B cell (primary cell): ENCODE measurements at regions of chr11 and their contacts with region 1.

Region 1: GRCh38 chr11:10641177-10641911 is 52.2 kb downstream of the IRAG1 start:
- DNase-seq: peak; percentile 77
- ATAC-seq: peak; percentile 87
- H3K4me3 ChIP-seq: peak overlapping the region in 1 of 5 experiments; percentile 35
- H3K4me3 Mint-ChIP-seq: peak overlapping the region; percentile 74
- H3K27ac ChIP-seq: peak overlapping the region; percentile 87 to 88
- H3K27ac Mint-ChIP-seq: peak overlapping the region; percentile 94
- H3K4me1 ChIP-seq: peaks cover 55 to 79% of the 10 kb centered on the region in 2 donors
- H3K4me1 Mint-ChIP-seq: peaks cover 81% of the 10 kb centered on the region
- H3K27me3 ChIP-seq: no peaks in the 10 kb centered on the region
- H3K27me3 Mint-ChIP-seq: no peaks in the 10 kb centered on the region
- CTCF ChIP-seq: no peak

Region 2: DNA sequence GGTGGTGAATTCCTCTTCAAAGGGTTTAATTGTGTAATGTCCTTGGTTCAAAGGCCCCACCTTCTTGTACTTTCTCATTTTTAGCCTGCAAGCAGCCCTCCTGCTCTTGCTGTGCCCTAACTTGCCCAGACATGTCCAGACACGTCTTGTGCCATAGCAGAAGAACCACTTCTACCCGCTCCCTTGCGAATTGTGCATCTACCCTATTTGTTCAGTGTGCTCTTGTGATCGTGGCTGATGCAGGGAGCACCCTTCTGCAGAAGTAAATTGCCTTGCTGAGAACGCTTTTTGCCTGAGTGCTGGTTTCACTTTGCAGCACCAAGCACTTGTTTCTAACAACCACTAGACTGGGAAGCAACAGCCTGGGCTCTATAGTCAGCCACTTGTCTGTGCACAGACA is 596.7 kb before region 1 on chr11:
- CTCF ChIA-PET with region 1: no interaction called
- POLR2A ChIA-PET with region 1: no interaction called
- intact Hi-C with region 1: loop called (anchors 5 kb)
- DNase-seq: no peak
- ATAC-seq: no peak
- H3K4me3 ChIP-seq: no peak overlapping the region
- H3K4me3 Mint-ChIP-seq: no peak overlapping the region
- H3K27ac ChIP-seq: no peak overlapping the region
- H3K27ac Mint-ChIP-seq: no peak overlapping the region
- H3K4me1 ChIP-seq: peaks cover 0 to 3% of the 10 kb centered on the region in 2 donors
- H3K4me1 Mint-ChIP-seq: peaks cover 12% of the 10 kb centered on the region
- H3K27me3 ChIP-seq: no peaks in the 10 kb centered on the region
- H3K27me3 Mint-ChIP-seq: no peaks in the 10 kb centered on the region
- CTCF ChIP-seq: no peak

Region 3: GRCh38 chr11:10990637-10991193 is 349.4 kb after region 1 on chr11:
- CTCF ChIA-PET with region 1: no interaction called
- POLR2A ChIA-PET with region 1: no interaction called
- intact Hi-C with region 1: no loop called
- DNase-seq: no peak
- ATAC-seq: no peak
- H3K4me3 ChIP-seq: no peak overlapping the region
- H3K4me3 Mint-ChIP-seq: no peak overlapping the region
- H3K27ac ChIP-seq: no peak overlapping the region
- H3K27ac Mint-ChIP-seq: no peak overlapping the region
- H3K4me1 ChIP-seq: peaks cover 4 to 8% of the 10 kb centered on the region in 2 donors
- H3K4me1 Mint-ChIP-seq: peaks cover 19% of the 10 kb centered on the region
- H3K27me3 ChIP-seq: peaks cover 0 to 3% (median 0%) of the 10 kb centered on the region in 4 experiments
- H3K27me3 Mint-ChIP-seq: no peaks in the 10 kb centered on the region
- CTCF ChIP-seq: no peak